ENCODE measurements at regions of chr10 and their contacts with region 1.

Region 1: DNA sequence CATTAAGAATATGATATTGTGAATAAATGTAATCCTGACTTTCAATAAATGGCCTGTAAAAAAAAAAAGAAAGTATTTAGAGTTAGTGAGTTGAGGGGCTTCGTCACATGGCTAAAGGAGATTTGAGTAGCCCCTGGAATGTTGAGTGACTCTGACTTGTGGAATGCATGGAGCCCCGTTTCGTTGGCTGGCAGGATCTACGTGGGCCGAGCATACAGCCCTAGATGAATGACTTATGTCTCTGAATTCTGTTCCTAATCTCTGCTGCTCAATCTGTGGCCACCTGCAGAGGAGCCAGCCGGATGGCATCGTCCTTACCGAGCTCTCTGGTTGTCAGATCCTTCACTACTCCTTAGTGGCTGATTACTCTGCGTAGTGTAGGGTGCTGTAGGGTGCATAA is 155.7 kb downstream of the MGMT start:
- DNase-seq: no peak
- H3K4me3 Mint-ChIP-seq: no peak overlapping the region
- H3K27ac Mint-ChIP-seq: no peak overlapping the region
- H3K4me1 Mint-ChIP-seq: no peaks in the 10 kb centered on the region
- H3K27me3 Mint-ChIP-seq: no peaks in the 10 kb centered on the region
- CTCF ChIP-seq: no peak

Region 2: GRCh38 chr10:129560361-129560760 is 62.4 kb before region 1 on chr10:
- CTCF ChIA-PET with region 1: no interaction called
- intact Hi-C with region 1: no loop called
- DNase-seq: no peak
- H3K4me3 Mint-ChIP-seq: no peak overlapping the region
- H3K27ac Mint-ChIP-seq: no peak overlapping the region
- H3K4me1 Mint-ChIP-seq: no peaks in the 10 kb centered on the region
- H3K27me3 Mint-ChIP-seq: no peaks in the 10 kb centered on the region
- CTCF ChIP-seq: no peak

Region 3: GRCh38 chr10:129678186-129678585 is 55.5 kb after region 1 on chr10:
- CTCF ChIA-PET with region 1: no interaction called
- intact Hi-C with region 1: no loop called
- DNase-seq: no peak
- H3K4me3 Mint-ChIP-seq: no peak overlapping the region
- H3K27ac Mint-ChIP-seq: no peak overlapping the region
- H3K4me1 Mint-ChIP-seq: no peaks in the 10 kb centered on the region
- H3K27me3 Mint-ChIP-seq: no peaks in the 10 kb centered on the region
- CTCF ChIP-seq: no peak

Region 4: GRCh38 chr10:129689671-129690071 is 66.9 kb after region 1 on chr10:
- CTCF ChIA-PET with region 1: no interaction called
- intact Hi-C with region 1: no loop called
- DNase-seq: no peak
- H3K4me3 Mint-ChIP-seq: no peak overlapping the region
- H3K27ac Mint-ChIP-seq: no peak overlapping the region
- H3K4me1 Mint-ChIP-seq: no peaks in the 10 kb centered on the region
- H3K27me3 Mint-ChIP-seq: no peaks in the 10 kb centered on the region
- CTCF ChIP-seq: no peak

Region 5: GRCh38 chr10:129704221-129704620 is 81.5 kb after region 1 on chr10:
- CTCF ChIA-PET with region 1: no interaction called
- intact Hi-C with region 1: no loop called
- DNase-seq: no peak
- H3K4me3 Mint-ChIP-seq: no peak overlapping the region
- H3K27ac Mint-ChIP-seq: no peak overlapping the region
- H3K4me1 Mint-ChIP-seq: no peaks in the 10 kb centered on the region
- H3K27me3 Mint-ChIP-seq: no peaks in the 10 kb centered on the region
- CTCF ChIP-seq: no peak

Region 6: GRCh38 chr10:130171196-130171595 is 548.5 kb after region 1 on chr10:
- CTCF ChIA-PET with region 1: no interaction called
- intact Hi-C with region 1: loop called (anchors 5 kb)
- DNase-seq: no peak
- H3K4me3 Mint-ChIP-seq: no peak overlapping the region
- H3K27ac Mint-ChIP-seq: no peak overlapping the region
- H3K4me1 Mint-ChIP-seq: no peaks in the 10 kb centered on the region
- H3K27me3 Mint-ChIP-seq: no peaks in the 10 kb centered on the region
- CTCF ChIP-seq: no peak